ENCODE measurements at regions of chr6 and their contacts with region 1.

Region 1: DNA sequence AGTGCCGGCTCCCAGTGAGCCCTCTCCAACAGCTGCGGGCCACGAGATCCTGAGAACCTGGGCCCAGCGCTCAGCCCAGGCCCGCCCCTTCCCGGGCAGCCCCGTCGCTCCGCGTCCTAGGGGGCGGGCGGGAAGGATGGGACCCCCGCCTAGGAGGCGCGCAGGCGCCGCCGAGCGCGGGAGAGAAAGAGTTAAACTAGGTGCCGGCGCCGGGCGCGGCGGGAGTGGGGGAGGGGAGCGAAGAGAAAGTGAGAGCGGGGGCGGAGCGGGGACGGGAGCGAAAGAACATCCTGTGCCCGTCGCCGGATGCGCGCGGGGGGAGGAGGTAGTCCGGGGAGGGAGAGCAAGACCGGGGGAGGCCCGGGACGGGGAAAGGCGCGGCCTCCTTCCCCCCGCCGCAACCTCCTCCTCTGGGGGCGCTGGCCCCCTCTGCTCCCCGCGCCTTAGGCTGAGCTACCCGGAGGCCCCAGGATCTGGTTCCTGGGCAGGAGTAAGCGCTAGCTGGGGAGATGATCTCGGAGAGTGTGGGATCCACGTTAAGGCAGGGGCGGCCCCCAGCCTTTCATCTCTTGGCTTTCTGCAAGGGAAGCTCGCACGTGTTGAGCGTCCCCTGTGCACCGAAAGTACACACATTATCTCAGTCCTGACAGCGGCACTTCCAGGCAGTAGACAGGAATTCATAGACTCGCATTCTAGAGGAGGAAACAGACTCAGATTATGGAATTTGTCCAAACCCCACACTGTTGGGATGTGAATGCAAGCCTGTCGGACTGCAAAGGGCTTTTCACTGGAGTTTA is 4.9 kb upstream of the ARMC12 start:
- DNase-seq: peak; percentile 85 to 96 (median 93)
- ATAC-seq: peak; percentile 62 to 68 (median 65)
- H3K4me3 ChIP-seq: peak overlapping the region; percentile 72 to 93
- H3K4me3 Mint-ChIP-seq: peak overlapping the region; percentile 74 to 84 (median 83)
- H3K27ac ChIP-seq: peak overlapping the region; percentile 96
- H3K27ac Mint-ChIP-seq: peak overlapping the region; percentile 89
- H3K4me1 ChIP-seq: peaks cover 49 to 92% of the 10 kb centered on the region in 2 experiments
- H3K4me1 Mint-ChIP-seq: peaks cover 76 to 87% (median 80%) of the 10 kb centered on the region in 3 donors
- H3K27me3 ChIP-seq: no peaks in the 10 kb centered on the region
- H3K27me3 Mint-ChIP-seq: no peaks in the 10 kb centered on the region

Region 2: DNA sequence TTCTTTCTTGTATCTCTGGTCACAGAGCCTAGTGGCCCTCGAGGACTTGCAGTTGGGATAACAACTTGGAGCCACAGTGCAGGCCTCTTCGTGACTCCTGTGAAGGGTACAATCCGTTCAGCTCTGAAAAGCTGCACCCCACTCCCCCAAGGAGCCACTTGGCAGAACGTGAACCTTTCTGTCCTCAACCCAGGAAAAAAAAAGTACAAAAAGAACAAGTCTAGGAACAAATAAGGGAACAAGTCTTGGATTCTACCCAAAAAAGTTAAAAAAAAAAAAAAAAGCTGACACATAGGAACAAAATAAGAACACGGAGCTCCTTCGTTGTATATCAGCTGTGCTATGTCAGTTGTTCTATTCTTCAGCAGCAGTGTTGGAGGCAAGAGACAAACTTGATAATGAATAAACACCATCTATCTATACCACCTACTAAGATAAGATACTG is 141.3 kb before region 1 on chr6:
- CTCF ChIA-PET with region 1: interaction called, 4 to 51 read pairs
- POLR2A ChIA-PET with region 1: interaction called in 1 of 2 experiments, 7 read pairs
- DNase-seq: no peak
- ATAC-seq: no peak
- H3K4me3 ChIP-seq: no peak overlapping the region
- H3K4me3 Mint-ChIP-seq: peak overlapping the region in 1 of 3 donors; percentile 67
- H3K27ac ChIP-seq: peak overlapping the region; percentile 42
- H3K27ac Mint-ChIP-seq: peak overlapping the region; percentile 84 to 92
- H3K4me1 ChIP-seq: peaks cover 54 to 83% of the 10 kb centered on the region in 2 experiments
- H3K4me1 Mint-ChIP-seq: peaks cover 90 to 95% (median 95%) of the 10 kb centered on the region in 3 donors
- H3K27me3 ChIP-seq: no peaks in the 10 kb centered on the region
- H3K27me3 Mint-ChIP-seq: no peaks in the 10 kb centered on the region

Region 3: GRCh38 chr6:35624341-35625070 is 107.4 kb before region 1 on chr6:
- CTCF ChIA-PET with region 1: interaction called, 4 to 27 read pairs
- POLR2A ChIA-PET with region 1: interaction called, 3 to 7 read pairs
- DNase-seq: peak in 8 of 35 experiments; percentile 6 to 78 (median 25)
- ATAC-seq: peak; percentile 82 to 88 (median 84)
- H3K4me3 ChIP-seq: no peak overlapping the region
- H3K4me3 Mint-ChIP-seq: peak overlapping the region in 1 of 3 donors; percentile 5
- H3K27ac ChIP-seq: peak overlapping the region; percentile 57
- H3K27ac Mint-ChIP-seq: peak overlapping the region; percentile 88 to 94
- H3K4me1 ChIP-seq: peaks cover 19 to 36% of the 10 kb centered on the region in 2 experiments
- H3K4me1 Mint-ChIP-seq: peaks cover 49 to 59% (median 52%) of the 10 kb centered on the region in 3 donors
- H3K27me3 ChIP-seq: no peaks in the 10 kb centered on the region
- H3K27me3 Mint-ChIP-seq: no peaks in the 10 kb centered on the region

Region 4: GRCh38 chr6:35663447-35664235 is 68.3 kb before region 1 on chr6:
- CTCF ChIA-PET with region 1: interaction called, 4 to 20 read pairs
- POLR2A ChIA-PET with region 1: interaction called in 1 of 2 experiments, 5 read pairs
- DNase-seq: peak in 2 of 35 experiments; percentile 14 to 52
- ATAC-seq: peak; percentile 79 to 83 (median 82)
- H3K4me3 ChIP-seq: no peak overlapping the region
- H3K4me3 Mint-ChIP-seq: no peak overlapping the region
- H3K27ac ChIP-seq: peak overlapping the region; percentile 51
- H3K27ac Mint-ChIP-seq: no peak overlapping the region
- H3K4me1 ChIP-seq: peaks cover 42 to 45% of the 10 kb centered on the region in 2 experiments
- H3K4me1 Mint-ChIP-seq: peaks cover 17 to 28% (median 27%) of the 10 kb centered on the region in 3 donors
- H3K27me3 ChIP-seq: no peaks in the 10 kb centered on the region
- H3K27me3 Mint-ChIP-seq: no peaks in the 10 kb centered on the region

Region 5: DNA sequence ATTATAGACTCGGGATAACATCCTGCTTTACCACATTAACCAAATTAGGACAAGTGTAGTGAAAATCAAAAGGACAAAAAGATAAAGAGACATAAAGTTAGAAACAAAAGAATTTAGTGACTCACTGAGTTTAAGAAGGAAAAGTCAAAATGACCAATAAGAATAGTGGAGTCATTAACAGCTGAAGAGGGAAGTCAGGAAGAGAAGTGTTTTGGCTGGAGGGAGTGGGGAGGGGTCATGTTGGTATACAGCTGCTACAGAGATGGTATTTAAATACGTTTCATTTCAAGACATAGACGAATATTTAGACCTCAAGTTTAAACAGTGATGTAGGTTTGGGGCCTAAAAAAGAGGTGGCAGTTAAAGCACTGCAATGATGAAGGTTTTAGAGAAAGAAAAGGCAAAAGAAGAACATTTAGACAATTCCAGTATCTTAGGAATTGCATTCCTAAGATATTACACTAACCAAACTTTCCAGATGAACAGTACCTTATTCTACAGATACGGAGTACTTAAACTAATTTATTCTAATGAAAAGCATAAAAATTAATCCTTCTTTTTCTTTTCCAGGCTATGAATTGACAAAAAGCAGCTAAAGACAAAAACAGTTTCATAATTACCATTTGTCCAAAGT is 53.8 kb before region 1 on chr6:
- CTCF ChIA-PET with region 1: interaction called, 3 to 19 read pairs
- POLR2A ChIA-PET with region 1: interaction called in 1 of 2 experiments, 3 read pairs
- DNase-seq: no peak
- ATAC-seq: no peak
- H3K4me3 ChIP-seq: no peak overlapping the region
- H3K4me3 Mint-ChIP-seq: peak overlapping the region; percentile 19 to 50 (median 21)
- H3K27ac ChIP-seq: peak overlapping the region; percentile 8
- H3K27ac Mint-ChIP-seq: peak overlapping the region; percentile 86
- H3K4me1 ChIP-seq: peaks cover 29 to 31% of the 10 kb centered on the region in 2 experiments
- H3K4me1 Mint-ChIP-seq: peaks cover 88 to 99% (median 92%) of the 10 kb centered on the region in 3 donors
- H3K27me3 ChIP-seq: no peaks in the 10 kb centered on the region
- H3K27me3 Mint-ChIP-seq: no peaks in the 10 kb centered on the region

Region 6: DNA sequence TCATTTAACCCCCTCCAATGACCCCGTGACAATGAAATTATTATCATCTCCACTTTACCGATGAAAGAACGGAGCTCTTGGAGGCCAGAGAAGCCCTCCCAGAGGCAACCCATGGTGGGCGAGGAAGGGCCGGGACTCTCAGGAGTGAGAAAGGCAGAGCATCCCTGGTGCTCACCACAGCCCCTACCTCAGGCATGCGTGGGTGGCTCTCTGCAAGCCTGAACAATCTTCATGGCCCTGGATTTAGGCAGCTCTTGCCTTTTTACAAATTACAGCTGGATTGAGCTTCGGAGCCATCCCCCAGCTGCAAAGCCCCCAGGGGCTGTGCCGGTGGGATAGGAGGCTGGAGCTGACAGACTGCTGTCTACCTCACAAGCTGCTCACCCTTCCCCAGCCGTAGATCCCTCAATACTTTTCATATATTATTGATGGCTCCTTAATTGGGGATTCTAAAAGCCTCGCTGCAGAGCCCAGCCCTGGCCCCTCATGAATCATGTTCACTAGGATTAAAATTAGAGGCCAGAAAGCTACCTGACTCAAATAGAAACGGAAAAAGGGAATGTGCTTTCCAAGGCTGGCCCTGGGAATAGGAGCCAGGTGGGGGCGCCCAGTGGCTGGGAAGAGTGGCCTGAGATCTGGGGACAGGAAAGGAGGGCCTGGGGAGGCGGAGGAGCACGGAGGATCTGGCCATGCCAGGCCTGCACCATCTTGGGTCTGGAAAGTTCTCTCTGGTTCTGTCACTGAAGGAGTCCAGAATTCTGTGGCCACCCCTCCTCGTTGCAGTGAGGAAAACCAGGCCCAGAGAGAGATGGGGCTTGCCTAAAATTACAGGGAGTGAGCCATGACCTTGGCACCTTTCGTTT is 1078.2 kb after region 1 on chr6:
- CTCF ChIA-PET with region 1: no interaction called
- POLR2A ChIA-PET with region 1: no interaction called
- DNase-seq: no peak
- ATAC-seq: no peak
- H3K4me3 ChIP-seq: no peak overlapping the region
- H3K4me3 Mint-ChIP-seq: no peak overlapping the region
- H3K27ac ChIP-seq: no peak overlapping the region
- H3K27ac Mint-ChIP-seq: no peak overlapping the region
- H3K4me1 ChIP-seq: no peaks in the 10 kb centered on the region
- H3K4me1 Mint-ChIP-seq: no peaks in the 10 kb centered on the region
- H3K27me3 ChIP-seq: peaks cover 0 to 2% of the 10 kb centered on the region in 2 experiments
- H3K27me3 Mint-ChIP-seq: peaks cover 8 to 12% of the 10 kb centered on the region in 2 donors